ENCODE measurements at regions of chr2 and their contacts with region 1.

Region 1: GRCh38 chr2:114769110-114769509 is 326.7 kb downstream of the DPP10 start:
- DNase-seq: no peak
- H3K4me3 Mint-ChIP-seq: no peak overlapping the region
- H3K27ac Mint-ChIP-seq: no peak overlapping the region
- H3K4me1 Mint-ChIP-seq: no peaks in the 10 kb centered on the region
- H3K27me3 Mint-ChIP-seq: no peaks in the 10 kb centered on the region
- CTCF ChIP-seq: no peak

Region 2: DNA sequence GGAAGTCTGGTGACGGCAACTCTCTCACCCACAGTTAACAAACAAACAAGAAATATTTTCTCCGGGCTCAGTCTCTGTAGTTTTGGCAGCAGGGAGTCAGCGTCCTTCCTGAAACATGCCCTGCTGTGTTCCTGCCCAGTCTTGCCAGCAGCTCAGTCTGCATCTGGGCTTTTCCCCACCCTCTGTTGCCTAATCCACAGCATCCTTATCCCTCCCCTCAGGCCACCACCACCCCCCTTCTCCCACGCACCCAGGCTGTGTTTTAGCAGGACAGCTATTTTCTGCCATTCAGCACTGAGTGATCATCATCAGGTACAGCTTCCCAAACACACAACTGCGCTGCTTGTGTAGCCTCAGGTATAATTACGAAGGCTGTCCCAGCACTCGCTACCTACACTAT is 158.4 kb before region 1 on chr2:
- CTCF ChIA-PET with region 1: no interaction called
- intact Hi-C with region 1: no loop called
- DNase-seq: no peak
- H3K4me3 Mint-ChIP-seq: no peak overlapping the region
- H3K27ac Mint-ChIP-seq: no peak overlapping the region
- H3K4me1 Mint-ChIP-seq: no peaks in the 10 kb centered on the region
- H3K27me3 Mint-ChIP-seq: peaks cover 25% of the 10 kb centered on the region
- CTCF ChIP-seq: no peak

Region 3: GRCh38 chr2:114727012-114727411 is 42.1 kb before region 1 on chr2:
- CTCF ChIA-PET with region 1: no interaction called
- intact Hi-C with region 1: loop called (anchors 2 kb)
- DNase-seq: no peak
- H3K4me3 Mint-ChIP-seq: no peak overlapping the region
- H3K27ac Mint-ChIP-seq: no peak overlapping the region
- H3K4me1 Mint-ChIP-seq: no peaks in the 10 kb centered on the region
- H3K27me3 Mint-ChIP-seq: no peaks in the 10 kb centered on the region
- CTCF ChIP-seq: no peak

Measured in Calu3 (cell line).